ENCODE measurements at regions of chr6 and their contacts with region 1.

Region 1: DNA sequence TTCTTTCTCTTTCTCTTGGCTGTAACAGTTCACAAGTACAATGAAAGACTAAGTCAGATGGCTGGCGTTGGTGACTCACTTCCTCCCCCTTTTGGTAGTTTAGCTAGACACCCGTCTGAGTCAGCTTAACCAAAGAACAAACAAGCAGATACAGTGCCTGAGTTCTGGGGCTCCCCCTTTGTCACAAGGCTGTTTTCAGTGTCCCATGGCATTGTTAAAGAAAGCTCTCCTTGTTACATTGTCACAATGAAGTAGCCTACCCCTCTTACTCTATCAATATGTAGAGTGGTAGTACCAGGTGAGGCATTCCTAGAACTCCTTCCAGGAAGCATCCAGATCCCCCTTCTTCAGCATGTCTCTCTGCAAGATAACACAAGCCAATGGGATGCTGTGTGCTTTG is 38.6 kb downstream of the KIAA0408 start:
- DNase-seq: peak; percentile 74
- ATAC-seq: peak; percentile 100
- H3K4me3 ChIP-seq: no peak overlapping the region
- H3K27ac ChIP-seq: no peak overlapping the region
- H3K4me1 ChIP-seq: no peaks in the 10 kb centered on the region; the same call in 1 of the 2 replicates
- H3K27me3 ChIP-seq: no peaks in the 10 kb centered on the region
- CTCF ChIP-seq: peak; percentile 55 to 84 (median 69)
- EP300 ChIP-seq: peak in 1 of 2 experiments; percentile 20; a peak in 1 of 4 replicates
- POLR2A ChIP-seq: no peak
- RAD21 ChIP-seq: peak; percentile 88

Region 2: DNA sequence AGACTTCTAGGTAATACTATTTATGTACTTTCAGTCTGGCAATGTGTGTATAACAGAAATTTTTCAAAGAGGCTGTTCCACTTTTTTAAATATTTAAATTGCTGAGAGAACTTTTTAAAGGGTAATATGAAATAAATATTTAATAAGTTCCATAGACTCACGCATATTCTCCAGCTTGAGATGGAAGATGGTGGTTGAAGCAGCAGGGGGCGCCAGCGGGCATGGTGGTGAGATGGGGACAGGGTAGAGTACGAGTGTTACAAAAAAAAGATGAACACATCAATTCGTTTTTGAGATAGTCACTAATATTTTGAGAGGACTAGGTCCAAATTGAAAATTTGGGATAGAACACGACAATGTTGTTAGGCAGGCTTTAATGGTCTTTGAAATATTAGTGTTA is 233.7 kb before region 1 on chr6:
- CTCF ChIA-PET with region 1: interaction called, 41 read pairs
- POLR2A ChIA-PET with region 1: no interaction called
- RAD21 ChIA-PET with region 1: interaction called, 4 read pairs
- SMC1A ChIA-PET with region 1: interaction called, 21 read pairs
- in situ Hi-C with region 1: no loop called
- intact Hi-C with region 1: loop called (anchors 1 kb)
- DNase-seq: no peak
- ATAC-seq: peak; percentile 84
- H3K4me3 ChIP-seq: no peak overlapping the region
- H3K27ac ChIP-seq: no peak overlapping the region
- H3K4me1 ChIP-seq: no peaks in the 10 kb centered on the region
- H3K27me3 ChIP-seq: no peaks in the 10 kb centered on the region
- CTCF ChIP-seq: peak; percentile 58 to 67 (median 67)
- EP300 ChIP-seq: no peak
- POLR2A ChIP-seq: no peak
- RAD21 ChIP-seq: peak; percentile 50

Region 3: GRCh38 chr6:127291495-127291894 is 129.1 kb before region 1 on chr6:
- CTCF ChIA-PET with region 1: interaction called, 25 read pairs
- POLR2A ChIA-PET with region 1: no interaction called
- RAD21 ChIA-PET with region 1: interaction called, 20 read pairs
- SMC1A ChIA-PET with region 1: interaction called, 29 read pairs
- in situ Hi-C with region 1: no loop called
- intact Hi-C with region 1: no loop called
- DNase-seq: peak; percentile 39
- ATAC-seq: peak; percentile 95
- H3K4me3 ChIP-seq: no peak overlapping the region
- H3K27ac ChIP-seq: peak overlapping the region; percentile 15; the same call in 1 of the 2 replicates
- H3K4me1 ChIP-seq: peaks cover 13% of the 10 kb centered on the region; the same call in 1 of the 2 replicates
- H3K27me3 ChIP-seq: no peaks in the 10 kb centered on the region
- CTCF ChIP-seq: no peak
- EP300 ChIP-seq: peak in 1 of 2 experiments; percentile 50; a peak in 1 of 4 replicates
- POLR2A ChIP-seq: no peak
- RAD21 ChIP-seq: no peak

Region 4: GRCh38 chr6:127317388-127318128 is 103.0 kb before region 1 on chr6:
- CTCF ChIA-PET with region 1: interaction called, 10 read pairs
- POLR2A ChIA-PET with region 1: no interaction called
- RAD21 ChIA-PET with region 1: no interaction called
- SMC1A ChIA-PET with region 1: interaction called, 13 read pairs
- in situ Hi-C with region 1: no loop called
- intact Hi-C with region 1: no loop called
- DNase-seq: no peak
- ATAC-seq: no peak
- H3K4me3 ChIP-seq: no peak overlapping the region
- H3K27ac ChIP-seq: no peak overlapping the region
- H3K4me1 ChIP-seq: no peaks in the 10 kb centered on the region
- H3K27me3 ChIP-seq: no peaks in the 10 kb centered on the region
- CTCF ChIP-seq: no peak
- EP300 ChIP-seq: no peak
- POLR2A ChIP-seq: no peak
- RAD21 ChIP-seq: no peak

Region 5: DNA sequence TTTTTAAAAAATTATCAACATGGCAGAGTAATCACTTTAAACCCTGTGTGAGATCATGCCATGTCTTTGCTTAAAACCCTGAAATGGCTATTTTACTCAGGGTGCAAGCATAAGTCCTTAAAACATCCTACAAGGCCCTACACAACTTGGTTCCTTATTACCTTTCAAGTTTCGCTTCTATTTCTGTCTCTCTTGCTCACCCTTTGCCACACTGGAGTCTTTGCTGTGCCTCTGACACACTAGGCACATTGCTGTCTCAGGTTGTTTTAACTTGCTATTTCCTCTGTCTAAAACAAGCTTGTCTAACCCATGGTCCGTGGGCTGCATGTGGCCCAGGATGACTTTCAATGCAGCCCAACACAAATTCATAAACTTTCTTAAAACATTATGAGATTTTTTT is 16.9 kb before region 1 on chr6:
- CTCF ChIA-PET with region 1: interaction called, 6 read pairs
- POLR2A ChIA-PET with region 1: no interaction called
- RAD21 ChIA-PET with region 1: interaction called, 5 read pairs
- SMC1A ChIA-PET with region 1: interaction called, 10 read pairs
- in situ Hi-C with region 1: no loop called
- intact Hi-C with region 1: no loop called
- DNase-seq: peak; percentile 45
- ATAC-seq: peak; percentile 92
- H3K4me3 ChIP-seq: peak overlapping the region; percentile 24; the same call in 1 of the 2 replicates
- H3K27ac ChIP-seq: peak overlapping the region; percentile 80
- H3K4me1 ChIP-seq: peaks cover 18% of the 10 kb centered on the region
- H3K27me3 ChIP-seq: no peaks in the 10 kb centered on the region
- CTCF ChIP-seq: no peak
- EP300 ChIP-seq: no peak
- POLR2A ChIP-seq: 0 out of 2 replicates have a peak, but pooled peaks have one; percentile 27
- RAD21 ChIP-seq: no peak

Region 6: DNA sequence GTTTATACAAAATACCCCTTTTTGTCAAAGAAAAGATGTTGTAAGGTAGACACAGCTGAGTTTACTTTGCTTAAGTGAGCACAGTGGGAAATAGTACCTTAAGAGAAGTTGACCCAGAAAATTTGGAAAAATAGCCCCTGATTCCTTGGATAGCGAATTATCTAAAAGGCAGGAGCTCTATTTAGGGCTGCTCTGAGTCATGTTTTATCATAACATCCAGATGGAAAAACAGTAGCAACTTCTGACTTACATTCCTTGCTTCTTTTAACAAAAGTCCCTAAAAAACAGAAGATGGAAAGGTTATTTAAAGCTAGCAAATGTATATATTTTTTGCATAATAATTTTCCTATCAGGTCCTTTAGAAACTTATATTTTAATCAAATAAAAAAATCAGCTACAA is 421.3 kb after region 1 on chr6:
- CTCF ChIA-PET with region 1: no interaction called
- POLR2A ChIA-PET with region 1: no interaction called
- RAD21 ChIA-PET with region 1: no interaction called
- SMC1A ChIA-PET with region 1: no interaction called
- in situ Hi-C with region 1: no loop called
- intact Hi-C with region 1: no loop called
- DNase-seq: no peak
- ATAC-seq: no peak
- H3K4me3 ChIP-seq: no peak overlapping the region
- H3K27ac ChIP-seq: no peak overlapping the region
- H3K4me1 ChIP-seq: no peaks in the 10 kb centered on the region
- H3K27me3 ChIP-seq: no peaks in the 10 kb centered on the region
- CTCF ChIP-seq: no peak
- EP300 ChIP-seq: no peak
- POLR2A ChIP-seq: no peak
- RAD21 ChIP-seq: no peak

Measured in GM12878 (cell line).